ENCODE measurements at regions of chr12 and their contacts with region 1.

Region 1: GRCh38 chr12:94149119-94149780 is 873 bp downstream of the PLXNC1 start:
- DNase-seq: no peak
- H3K4me3 Mint-ChIP-seq: peak overlapping the region; percentile 53
- H3K27ac Mint-ChIP-seq: no peak overlapping the region
- H3K4me1 Mint-ChIP-seq: no peaks in the 10 kb centered on the region
- H3K27me3 Mint-ChIP-seq: peaks cover 63% of the 10 kb centered on the region
- CTCF ChIP-seq: no peak

Region 2: GRCh38 chr12:94012590-94012989 is 136.7 kb before region 1 on chr12:
- CTCF ChIA-PET with region 1: no interaction called
- POLR2A ChIA-PET with region 1: no interaction called
- intact Hi-C with region 1: no loop called
- DNase-seq: no peak
- H3K4me3 Mint-ChIP-seq: no peak overlapping the region
- H3K27ac Mint-ChIP-seq: no peak overlapping the region
- H3K4me1 Mint-ChIP-seq: peaks cover 7% of the 10 kb centered on the region
- H3K27me3 Mint-ChIP-seq: no peaks in the 10 kb centered on the region
- CTCF ChIP-seq: no peak

Region 3: GRCh38 chr12:94195443-94195842 is 46.2 kb after region 1 on chr12:
- CTCF ChIA-PET with region 1: no interaction called
- POLR2A ChIA-PET with region 1: no interaction called
- intact Hi-C with region 1: no loop called
- DNase-seq: no peak
- H3K4me3 Mint-ChIP-seq: no peak overlapping the region
- H3K27ac Mint-ChIP-seq: no peak overlapping the region
- H3K4me1 Mint-ChIP-seq: peaks cover 7% of the 10 kb centered on the region
- H3K27me3 Mint-ChIP-seq: no peaks in the 10 kb centered on the region
- CTCF ChIP-seq: peak; percentile 5

Region 4: DNA sequence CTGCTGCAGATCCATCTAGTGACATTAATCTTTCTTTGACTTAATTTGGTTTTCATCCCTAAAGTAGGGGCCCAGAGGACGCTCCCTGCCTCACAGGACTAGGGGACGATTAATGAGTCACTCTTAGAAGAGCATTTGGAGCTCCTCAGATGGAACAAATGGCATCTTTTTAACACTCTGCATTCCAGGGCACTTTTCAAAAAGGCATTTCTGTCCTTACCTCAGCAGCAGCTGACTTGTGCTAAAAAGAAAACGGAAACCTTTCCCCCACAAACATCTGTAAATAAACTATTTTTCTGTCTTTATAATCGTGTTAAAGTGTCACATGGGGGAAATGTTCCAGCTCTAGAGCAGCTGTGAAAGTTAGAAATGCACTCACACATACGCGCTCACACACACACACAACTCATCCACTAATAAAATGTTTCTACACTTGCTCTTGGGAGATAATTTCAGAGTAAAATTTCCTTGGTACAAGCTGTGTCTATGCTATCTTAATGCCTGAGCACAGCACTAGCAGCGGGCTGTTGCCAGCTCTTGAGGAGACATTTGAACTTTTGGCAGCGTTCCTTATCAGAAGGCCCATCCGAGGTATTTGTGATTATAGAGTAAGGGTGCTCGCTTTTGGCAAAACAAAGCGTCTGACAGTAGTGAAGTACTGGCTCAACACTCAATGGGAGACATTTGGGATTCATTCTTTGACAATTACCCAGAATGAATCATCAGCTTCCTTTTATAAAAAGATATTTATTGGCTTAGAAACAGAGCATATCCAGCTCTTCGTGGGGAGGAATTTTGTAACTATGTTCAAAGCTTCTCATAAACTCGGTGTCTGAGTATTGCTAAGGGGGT is 140.4 kb after region 1 on chr12:
- CTCF ChIA-PET with region 1: no interaction called
- POLR2A ChIA-PET with region 1: no interaction called
- intact Hi-C with region 1: no loop called
- DNase-seq: peak; percentile 17
- H3K4me3 Mint-ChIP-seq: no peak overlapping the region
- H3K27ac Mint-ChIP-seq: no peak overlapping the region
- H3K4me1 Mint-ChIP-seq: peaks cover 7% of the 10 kb centered on the region
- H3K27me3 Mint-ChIP-seq: no peaks in the 10 kb centered on the region
- CTCF ChIP-seq: no peak

Region 5: DNA sequence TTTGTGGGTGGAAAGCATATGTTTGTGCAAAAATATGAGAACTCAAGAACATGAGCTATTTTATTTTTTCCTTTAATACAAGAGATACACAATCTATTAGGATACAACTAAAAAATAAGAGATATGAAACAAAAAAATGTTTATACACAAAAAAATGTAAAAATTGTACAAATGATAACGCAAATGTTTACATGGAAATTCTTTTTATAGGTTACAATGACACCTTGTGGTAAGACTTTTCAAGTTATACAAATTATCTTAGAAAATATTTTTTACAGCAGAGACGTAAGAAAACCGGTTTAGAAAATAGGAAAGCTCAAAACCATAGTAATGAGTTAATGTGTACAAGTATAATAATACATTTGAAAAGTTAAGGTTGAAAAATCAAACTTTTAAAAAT is 284.9 kb after region 1 on chr12:
- CTCF ChIA-PET with region 1: no interaction called
- POLR2A ChIA-PET with region 1: no interaction called
- intact Hi-C with region 1: loop called (anchors 5 kb)
- DNase-seq: no peak
- H3K4me3 Mint-ChIP-seq: no peak overlapping the region
- H3K27ac Mint-ChIP-seq: no peak overlapping the region
- H3K4me1 Mint-ChIP-seq: no peaks in the 10 kb centered on the region
- H3K27me3 Mint-ChIP-seq: no peaks in the 10 kb centered on the region
- CTCF ChIP-seq: peak; percentile 16

Region 6: DNA sequence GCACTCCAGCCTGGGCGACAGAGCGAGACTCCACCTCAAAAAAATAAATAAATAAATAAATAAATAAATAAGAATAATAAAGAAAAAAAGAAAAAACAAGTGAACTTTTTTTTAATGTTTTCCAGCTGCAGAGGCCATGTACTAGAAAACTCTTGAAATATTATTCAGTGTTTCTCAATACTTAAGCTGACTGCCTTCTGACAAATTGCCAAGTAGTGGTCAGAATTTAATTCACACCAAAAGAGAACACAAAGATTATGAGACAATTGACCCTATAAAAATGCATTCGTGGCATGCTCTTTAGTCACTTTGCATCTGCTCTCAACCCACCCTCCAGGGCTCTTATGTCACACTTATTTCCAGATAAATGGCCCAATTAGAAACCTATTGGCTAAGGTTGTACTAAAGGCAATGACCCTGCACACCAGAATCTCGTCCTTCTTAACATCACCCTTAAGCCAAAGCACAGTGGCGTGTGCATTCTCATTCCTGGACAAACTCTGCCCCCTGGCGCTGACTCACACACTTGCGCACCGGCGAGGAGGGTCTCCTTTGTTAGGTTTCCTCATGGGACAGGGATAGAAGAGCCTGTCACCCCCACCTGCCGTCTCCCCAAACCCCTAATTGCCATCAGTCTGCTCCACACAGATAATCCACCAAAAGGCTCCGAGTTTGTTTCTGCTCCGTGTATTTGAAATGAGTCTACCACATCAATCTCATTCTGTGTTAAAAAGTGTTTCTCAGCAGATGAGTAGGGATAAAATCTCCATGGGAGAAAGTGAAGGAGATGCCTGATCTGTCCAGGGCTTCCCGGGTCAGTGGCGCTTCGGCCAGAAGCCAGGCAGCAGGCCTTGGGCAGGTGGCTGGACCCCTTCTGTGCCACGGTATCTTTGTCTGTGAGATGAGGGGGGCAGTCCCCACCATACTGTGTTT is 383.5 kb after region 1 on chr12:
- CTCF ChIA-PET with region 1: interaction called, 10 read pairs
- POLR2A ChIA-PET with region 1: interaction called, 3 read pairs
- intact Hi-C with region 1: loop called (anchors 1 kb)
- DNase-seq: peak; percentile 80
- H3K4me3 Mint-ChIP-seq: no peak overlapping the region
- H3K27ac Mint-ChIP-seq: no peak overlapping the region
- H3K4me1 Mint-ChIP-seq: peaks cover 10% of the 10 kb centered on the region
- H3K27me3 Mint-ChIP-seq: no peaks in the 10 kb centered on the region
- CTCF ChIP-seq: peak; percentile 87

Region 7: GRCh38 chr12:94753036-94753679 is 603.9 kb after region 1 on chr12:
- CTCF ChIA-PET with region 1: no interaction called
- POLR2A ChIA-PET with region 1: no interaction called
- intact Hi-C with region 1: loop called (anchors 10 kb)
- DNase-seq: peak; percentile 70
- H3K4me3 Mint-ChIP-seq: no peak overlapping the region
- H3K27ac Mint-ChIP-seq: no peak overlapping the region
- H3K4me1 Mint-ChIP-seq: peaks cover 13% of the 10 kb centered on the region
- H3K27me3 Mint-ChIP-seq: no peaks in the 10 kb centered on the region
- CTCF ChIP-seq: no peak

Region 8: GRCh38 chr12:95336390-95337067 is 1187.3 kb after region 1 on chr12:
- CTCF ChIA-PET with region 1: no interaction called
- POLR2A ChIA-PET with region 1: no interaction called
- intact Hi-C with region 1: loop called (anchors 5 kb)
- DNase-seq: peak; percentile 57
- H3K4me3 Mint-ChIP-seq: no peak overlapping the region
- H3K27ac Mint-ChIP-seq: no peak overlapping the region
- H3K4me1 Mint-ChIP-seq: peaks cover 6% of the 10 kb centered on the region
- H3K27me3 Mint-ChIP-seq: no peaks in the 10 kb centered on the region
- CTCF ChIP-seq: peak; percentile 71